Left colon (tissue), 2 donors: ENCODE measurements at regions of chr6 and their contacts with region 1.

Region 1: GRCh38 chr6:33771146-33772081 is 17.5 kb downstream of the LEMD2 start:
- DNase-seq: peak; percentile 52 to 74
- ATAC-seq: peak; percentile 77

Region 2: GRCh38 chr6:33433544-33434191 is 337.7 kb before region 1 on chr6:
- intact Hi-C with region 1: no loop called
- DNase-seq: no peak
- ATAC-seq: no peak

Region 3: DNA sequence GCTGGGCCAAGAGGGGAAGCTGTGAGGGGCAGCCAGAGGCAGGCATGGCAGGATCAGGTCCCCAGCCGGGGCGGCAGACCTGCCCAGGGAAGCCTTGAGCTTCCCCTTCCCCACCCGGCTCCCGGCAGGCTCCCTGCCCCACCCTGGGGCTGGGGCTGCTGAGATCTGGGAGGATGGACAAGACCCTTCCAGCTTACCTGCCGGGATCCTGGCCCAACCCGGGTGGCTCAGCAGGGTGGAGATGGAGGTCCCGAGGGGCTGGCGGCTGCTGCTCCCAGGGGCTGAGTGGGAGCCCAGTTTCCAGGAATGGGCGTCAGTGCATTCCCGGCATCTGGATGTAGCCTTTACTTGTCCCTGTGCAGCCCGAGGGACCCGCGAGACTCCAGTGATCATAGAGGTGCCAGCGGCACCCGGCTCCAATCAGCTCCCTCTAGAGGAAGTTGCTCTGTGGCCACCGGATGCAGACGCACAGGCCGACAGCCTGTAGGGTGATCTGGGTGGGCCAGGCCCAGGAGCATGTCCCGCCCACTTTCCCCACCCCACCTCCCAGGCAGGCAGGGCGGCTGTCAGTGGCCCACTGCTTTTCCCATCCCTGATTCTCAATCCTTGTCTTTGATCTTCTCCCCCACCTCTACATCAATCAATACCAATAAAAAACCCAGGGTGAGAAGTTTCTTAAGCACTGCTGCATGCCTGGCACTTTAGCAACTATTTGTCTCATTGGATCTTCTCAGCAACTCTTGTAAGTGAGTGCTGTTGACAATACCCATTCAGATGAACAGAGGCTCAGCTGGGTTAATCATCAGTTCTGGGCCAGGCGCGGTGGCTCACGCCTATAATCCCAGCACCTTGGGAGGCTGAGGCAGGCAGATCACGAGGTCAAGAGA is 191.3 kb before region 1 on chr6 and contains the start of gene BAK1:
- intact Hi-C with region 1: loop called in 1 of 2 experiments (anchors 10 kb)
- DNase-seq: peak; percentile 95 to 96
- ATAC-seq: peak; percentile 67
- total RNA-seq, gene BAK1: 85.6 to 93.5 TPM

Region 4: DNA sequence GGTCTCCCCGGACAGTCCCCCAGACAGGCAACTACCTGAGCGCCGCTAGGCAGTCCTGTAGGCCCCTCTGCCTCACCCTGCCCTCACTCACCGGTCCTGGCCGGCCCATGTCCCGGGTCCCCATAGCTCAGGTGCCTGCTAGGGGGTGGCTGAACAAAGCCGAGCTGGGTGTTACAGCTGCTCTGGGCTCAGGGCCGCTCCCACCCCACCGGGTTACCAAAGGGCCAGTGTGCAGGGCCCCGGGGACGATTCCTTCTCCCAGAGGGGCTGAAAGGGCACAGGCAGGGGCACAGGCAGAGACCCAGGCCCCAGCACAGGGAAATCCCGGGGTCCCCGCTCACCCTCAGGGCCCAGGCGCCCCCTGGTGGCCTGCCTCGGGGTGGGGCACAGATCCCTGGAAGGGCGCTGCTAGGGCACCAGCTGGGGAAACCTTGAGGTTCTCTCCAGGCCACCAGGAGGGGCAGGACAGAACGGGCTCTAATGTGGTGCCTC is 256.1 kb after region 1 on chr6:
- intact Hi-C with region 1: loop called in 1 of 2 experiments (anchors 5 kb)
- DNase-seq: peak; percentile 42 to 79
- ATAC-seq: peak; percentile 85

Region 5: DNA sequence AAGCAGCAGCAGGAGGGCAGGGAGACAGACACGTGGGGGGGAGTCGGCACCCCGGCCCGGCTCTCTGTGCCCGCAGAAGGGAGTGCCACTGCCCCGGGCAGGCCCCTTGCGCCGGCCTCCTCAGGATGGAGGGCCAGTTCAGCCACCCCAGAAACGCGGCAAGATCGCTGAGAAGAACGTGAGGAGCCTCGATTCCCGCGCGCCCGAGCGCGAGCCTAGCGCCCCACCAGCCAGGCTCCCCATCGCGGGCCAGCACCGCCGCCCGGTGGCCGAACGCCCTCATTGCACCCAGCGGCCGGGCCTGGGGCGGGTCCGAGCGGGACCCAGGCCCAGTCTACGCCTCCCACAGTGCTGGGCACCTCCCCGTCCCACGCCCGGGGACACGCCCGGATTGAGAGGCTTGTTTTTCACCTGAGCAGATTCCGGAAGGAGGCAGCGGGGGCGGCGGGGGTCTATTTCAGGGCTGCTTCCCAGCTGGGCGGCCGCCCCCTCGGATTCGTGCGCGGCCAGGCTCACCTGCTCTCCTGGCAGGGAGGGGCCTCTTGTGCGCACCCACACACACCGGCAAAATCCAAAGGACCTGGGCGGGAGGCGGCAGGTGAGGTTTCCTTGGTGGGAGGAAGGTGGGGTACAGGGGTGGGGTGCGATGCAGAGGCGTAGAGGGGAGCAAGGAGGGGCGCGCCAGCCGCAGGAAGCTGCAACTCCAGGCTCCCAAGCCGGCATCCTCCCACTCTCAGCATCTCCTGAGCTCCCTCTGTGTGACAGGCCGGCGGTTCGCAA is 383.4 kb after region 1 on chr6:
- intact Hi-C with region 1: loop called in 1 of 2 experiments (anchors 10 kb)
- DNase-seq: peak in 1 of 2 donors; percentile 55
- ATAC-seq: peak; percentile 85